ENCODE measurements at regions of chr13 and their contacts with region 1.

Region 1: DNA sequence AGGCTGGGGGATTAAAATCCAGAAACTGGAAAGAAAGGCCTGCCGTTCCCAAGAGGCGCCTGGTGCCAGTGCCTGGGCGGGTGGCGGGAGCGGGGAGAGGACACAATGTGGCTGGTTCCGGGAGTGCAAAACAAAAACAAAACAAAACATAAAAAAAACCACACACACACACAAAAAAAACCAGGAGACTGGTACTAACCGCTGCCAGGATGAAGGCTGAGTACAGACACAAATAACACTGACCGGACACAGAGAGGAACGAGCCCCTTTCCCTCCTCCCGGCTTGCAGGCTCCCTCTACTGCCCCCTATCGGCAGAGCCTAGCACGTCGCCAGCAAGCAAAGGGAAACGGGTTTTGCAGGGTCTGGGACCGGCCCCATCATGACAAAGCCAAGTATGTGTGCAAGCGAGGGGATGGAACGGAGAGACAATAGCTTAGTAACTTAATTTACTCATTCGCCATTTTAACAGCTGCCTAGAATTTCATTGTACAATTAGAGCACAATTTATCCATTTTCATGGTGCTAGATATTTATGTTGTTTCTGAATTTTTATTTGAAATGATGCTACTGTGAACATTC is 17.9 kb upstream of the ZDHHC20 start:
- DNase-seq: peak; percentile 81 to 85
- H3K4me3 ChIP-seq: no peak overlapping the region
- H3K4me3 Mint-ChIP-seq: no peak overlapping the region
- H3K27ac Mint-ChIP-seq: peak overlapping the region; percentile 68
- H3K4me1 ChIP-seq: peaks cover 11% of the 10 kb centered on the region; the same call in 1 of the 2 replicates
- H3K4me1 Mint-ChIP-seq: peaks cover 14% of the 10 kb centered on the region
- H3K27me3 ChIP-seq: no peaks in the 10 kb centered on the region
- H3K27me3 Mint-ChIP-seq: no peaks in the 10 kb centered on the region
- CTCF ChIP-seq: peak; percentile 87 to 95

Region 2: GRCh38 chr13:21106089-21106488 is 370.9 kb before region 1 on chr13:
- CTCF ChIA-PET with region 1: no interaction called
- POLR2A ChIA-PET with region 1: no interaction called
- intact Hi-C with region 1: loop called (anchors 1 kb)
- DNase-seq: no peak
- H3K4me3 ChIP-seq: no peak overlapping the region
- H3K4me3 Mint-ChIP-seq: no peak overlapping the region
- H3K27ac Mint-ChIP-seq: no peak overlapping the region
- H3K4me1 ChIP-seq: no peaks in the 10 kb centered on the region
- H3K4me1 Mint-ChIP-seq: no peaks in the 10 kb centered on the region
- H3K27me3 ChIP-seq: no peaks in the 10 kb centered on the region
- H3K27me3 Mint-ChIP-seq: no peaks in the 10 kb centered on the region
- CTCF ChIP-seq: no peak

Region 3: GRCh38 chr13:21297914-21298831 is 178.8 kb before region 1 on chr13:
- CTCF ChIA-PET with region 1: interaction called, 16 read pairs
- POLR2A ChIA-PET with region 1: no interaction called
- intact Hi-C with region 1: loop called (anchors 1 kb)
- DNase-seq: peak; percentile 88 to 92
- H3K4me3 ChIP-seq: peak overlapping the region; percentile 88
- H3K4me3 Mint-ChIP-seq: peak overlapping the region; percentile 90
- H3K27ac Mint-ChIP-seq: peak overlapping the region; percentile 73
- H3K4me1 ChIP-seq: no peaks in the 10 kb centered on the region; the same call in 1 of the 2 replicates
- H3K4me1 Mint-ChIP-seq: peaks cover 14% of the 10 kb centered on the region
- H3K27me3 ChIP-seq: no peaks in the 10 kb centered on the region
- H3K27me3 Mint-ChIP-seq: no peaks in the 10 kb centered on the region
- CTCF ChIP-seq: peak; percentile 80 to 95

Region 4: GRCh38 chr13:21338156-21338555 is 138.8 kb before region 1 on chr13:
- CTCF ChIA-PET with region 1: interaction called, 10 read pairs
- POLR2A ChIA-PET with region 1: no interaction called
- intact Hi-C with region 1: loop called (anchors 1 kb)
- DNase-seq: peak; percentile 54 to 56
- H3K4me3 ChIP-seq: no peak overlapping the region
- H3K4me3 Mint-ChIP-seq: no peak overlapping the region
- H3K27ac Mint-ChIP-seq: no peak overlapping the region
- H3K4me1 ChIP-seq: no peaks in the 10 kb centered on the region
- H3K4me1 Mint-ChIP-seq: no peaks in the 10 kb centered on the region
- H3K27me3 ChIP-seq: no peaks in the 10 kb centered on the region
- H3K27me3 Mint-ChIP-seq: no peaks in the 10 kb centered on the region
- CTCF ChIP-seq: peak; percentile 28 to 57

Region 5: GRCh38 chr13:21383090-21383489 is 93.9 kb before region 1 on chr13:
- CTCF ChIA-PET with region 1: no interaction called
- POLR2A ChIA-PET with region 1: interaction called, 12 read pairs
- intact Hi-C with region 1: no loop called
- DNase-seq: no peak
- H3K4me3 ChIP-seq: no peak overlapping the region
- H3K4me3 Mint-ChIP-seq: no peak overlapping the region
- H3K27ac Mint-ChIP-seq: no peak overlapping the region
- H3K4me1 ChIP-seq: no peaks in the 10 kb centered on the region
- H3K4me1 Mint-ChIP-seq: no peaks in the 10 kb centered on the region
- H3K27me3 ChIP-seq: no peaks in the 10 kb centered on the region
- H3K27me3 Mint-ChIP-seq: no peaks in the 10 kb centered on the region
- CTCF ChIP-seq: no peak